Activated CD8-positive, alpha-beta memory T cell treated with anti-CD3 and anti-CD28 coated beads, Interleukin-2, amount 10 ng/mL, durations not matched to agents 7 days and 5 days (primary cell): ENCODE measurements at regions of chr20 and their contacts with region 1.

Region 1: DNA sequence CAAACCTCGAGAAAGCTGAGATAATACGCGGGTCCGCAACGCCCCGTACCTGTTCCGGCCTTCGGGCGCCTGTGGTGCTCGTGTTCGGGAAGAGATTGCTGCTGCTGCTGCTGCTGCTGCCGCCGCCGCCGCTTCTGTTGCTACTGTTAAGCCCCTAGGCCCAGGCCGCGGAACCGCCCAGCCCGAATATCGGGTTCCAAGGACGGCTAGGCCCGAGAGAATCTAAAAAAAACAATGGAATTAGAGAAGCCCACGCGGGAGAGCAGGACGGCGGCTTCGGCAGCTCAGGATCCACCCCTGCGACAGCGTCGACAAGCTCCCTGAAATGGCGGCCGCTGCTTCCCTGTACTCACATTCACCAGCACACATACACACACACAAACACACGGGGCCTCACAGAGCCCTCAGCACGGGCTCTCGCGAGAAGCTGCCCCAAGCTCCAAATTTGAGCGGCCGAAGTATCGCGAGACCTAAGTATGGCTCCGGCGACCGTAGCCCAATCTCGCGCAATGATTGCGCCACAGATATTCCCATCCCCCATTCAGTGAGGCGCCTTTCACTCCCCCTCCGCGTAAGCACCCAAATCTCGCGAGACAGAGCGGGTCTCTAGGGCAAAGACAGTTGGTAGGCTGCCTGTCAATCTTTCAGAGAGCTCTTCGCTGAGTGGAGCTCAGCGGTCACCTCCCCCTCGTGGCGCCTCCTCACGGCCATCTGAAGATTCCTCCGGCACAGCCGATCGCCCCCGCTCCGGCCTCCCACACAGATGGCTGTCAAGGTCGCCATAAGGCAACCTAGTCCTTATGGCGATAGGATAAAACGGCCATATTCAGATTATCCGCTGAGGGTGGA is at the start of gene RBM39:
- DNase-seq: peak; percentile 100
- ATAC-seq: peak; percentile 85
- H3K4me3 Mint-ChIP-seq: peak within 1 kb of the TSS; percentile 94
- H3K27ac Mint-ChIP-seq: peak within 1 kb of the TSS; percentile 100
- H3K4me1 Mint-ChIP-seq: peaks cover 34% of the 10 kb centered on the region
- H3K27me3 Mint-ChIP-seq: no peaks in the 10 kb centered on the region
- total RNA-seq, gene RBM39: 357 to 360 TPM

Region 2: DNA sequence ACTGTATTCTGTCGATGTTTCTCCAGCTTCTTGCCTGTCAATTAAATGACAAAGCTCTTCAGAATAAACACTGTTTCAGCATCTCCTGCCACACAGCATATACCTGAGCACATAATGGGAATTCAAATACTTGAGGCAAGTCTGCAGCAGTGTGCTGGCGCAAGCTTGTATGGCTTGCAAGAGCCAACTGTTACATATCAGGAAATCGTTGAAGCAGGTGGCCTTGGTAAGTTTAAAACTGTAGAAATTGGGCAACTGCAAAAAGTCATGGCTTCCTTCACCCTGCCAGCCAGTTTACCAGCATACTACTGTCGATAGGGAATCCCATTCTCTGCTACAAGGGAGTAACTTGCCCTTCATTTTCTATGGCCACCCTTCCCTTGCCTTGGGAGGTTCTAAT is 100.4 kb before region 1 on chr20:
- CTCF ChIA-PET with region 1: no interaction called
- DNase-seq: no peak
- ATAC-seq: no peak
- H3K4me3 Mint-ChIP-seq: no peak overlapping the region
- H3K27ac Mint-ChIP-seq: no peak overlapping the region
- H3K4me1 Mint-ChIP-seq: peaks cover 52% of the 10 kb centered on the region
- H3K27me3 Mint-ChIP-seq: no peaks in the 10 kb centered on the region

Region 3: DNA sequence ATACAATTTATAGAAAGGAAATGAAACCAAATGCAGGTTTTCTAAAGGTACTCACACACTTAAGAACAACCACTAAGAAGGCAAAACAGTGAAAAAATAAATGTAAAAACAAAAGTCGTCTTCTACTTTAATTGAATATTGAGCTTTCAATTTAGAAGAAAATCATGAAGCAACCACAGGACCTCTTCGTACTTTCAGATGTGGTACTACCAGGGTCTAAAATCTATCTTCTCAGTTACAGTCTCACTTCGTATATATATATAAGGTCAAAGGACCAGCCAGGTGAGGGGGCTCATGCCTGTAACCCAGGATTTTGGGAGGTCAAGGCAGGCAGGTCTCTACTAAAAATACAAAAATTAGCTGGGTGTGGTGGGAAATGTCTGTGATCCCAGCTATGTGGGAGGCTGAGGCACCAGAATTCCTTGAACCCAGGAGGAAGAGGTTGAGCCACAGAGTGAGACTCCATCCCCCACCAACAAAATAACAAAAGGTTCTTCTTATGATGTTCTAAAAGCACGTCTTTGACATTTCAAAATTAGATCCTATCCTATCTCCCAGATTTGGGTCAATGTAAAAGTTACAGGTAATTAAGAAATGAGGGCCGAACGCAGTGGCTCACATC is 30.4 kb before region 1 on chr20:
- CTCF ChIA-PET with region 1: interaction called, 15 read pairs
- DNase-seq: no peak
- ATAC-seq: peak; percentile 64
- H3K4me3 Mint-ChIP-seq: peak overlapping the region; percentile 56
- H3K27ac Mint-ChIP-seq: peak overlapping the region; percentile 81
- H3K4me1 Mint-ChIP-seq: peaks cover 56% of the 10 kb centered on the region
- H3K27me3 Mint-ChIP-seq: no peaks in the 10 kb centered on the region

Region 4: DNA sequence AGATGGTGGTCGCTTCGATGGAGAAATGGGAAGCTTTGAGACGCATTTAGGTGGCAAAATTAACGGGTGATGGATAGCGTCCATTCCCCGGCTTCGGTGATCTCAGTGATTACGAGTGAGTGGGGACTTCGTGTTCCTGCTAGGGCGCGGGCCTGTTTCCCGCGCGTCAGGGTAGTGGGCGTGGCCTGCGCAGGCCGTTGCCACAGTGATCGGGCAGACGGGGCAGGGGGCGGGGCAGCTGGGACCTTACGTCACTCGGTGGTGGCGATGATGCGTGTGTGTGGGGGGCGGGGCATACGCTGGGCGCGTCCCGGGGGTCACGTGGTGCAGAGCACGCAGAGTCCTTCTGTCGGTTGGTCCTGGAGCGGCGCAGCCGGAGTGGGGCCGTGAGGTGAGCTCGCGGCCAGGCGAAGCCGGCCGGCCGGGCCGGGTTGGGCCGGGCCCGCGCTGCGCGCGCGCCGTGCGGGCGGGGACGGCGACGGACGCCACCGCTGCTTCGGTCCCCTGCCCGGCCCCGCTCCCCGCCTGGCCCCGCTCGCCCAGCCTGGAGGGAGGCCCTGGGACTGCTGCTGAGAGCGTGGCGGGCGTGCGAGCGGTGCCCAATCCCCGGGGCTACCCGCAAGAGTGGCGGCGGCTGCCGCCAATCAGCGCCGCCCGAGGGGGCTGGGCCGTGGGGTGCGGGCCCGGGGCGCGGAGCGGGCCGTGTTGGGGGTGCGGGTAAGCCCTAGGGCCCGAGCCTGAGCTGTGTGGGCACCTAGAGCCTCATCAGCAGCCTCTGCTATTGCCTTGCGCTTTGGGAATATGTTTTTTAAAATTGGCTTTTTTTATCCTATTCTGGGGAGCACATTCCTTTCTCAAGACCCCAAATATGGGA is 29.8 kb after region 1 on chr20 and contains the start of gene PHF20:
- CTCF ChIA-PET with region 1: interaction called, 104 read pairs
- DNase-seq: peak; percentile 100
- ATAC-seq: peak; percentile 93
- H3K4me3 Mint-ChIP-seq: peak within 1 kb of the TSS; percentile 85
- H3K27ac Mint-ChIP-seq: peak within 1 kb of the TSS; percentile 92
- H3K4me1 Mint-ChIP-seq: peaks cover 65% of the 10 kb centered on the region
- H3K27me3 Mint-ChIP-seq: no peaks in the 10 kb centered on the region
- total RNA-seq, gene PHF20: 50.8 to 52.4 TPM

Region 5: DNA sequence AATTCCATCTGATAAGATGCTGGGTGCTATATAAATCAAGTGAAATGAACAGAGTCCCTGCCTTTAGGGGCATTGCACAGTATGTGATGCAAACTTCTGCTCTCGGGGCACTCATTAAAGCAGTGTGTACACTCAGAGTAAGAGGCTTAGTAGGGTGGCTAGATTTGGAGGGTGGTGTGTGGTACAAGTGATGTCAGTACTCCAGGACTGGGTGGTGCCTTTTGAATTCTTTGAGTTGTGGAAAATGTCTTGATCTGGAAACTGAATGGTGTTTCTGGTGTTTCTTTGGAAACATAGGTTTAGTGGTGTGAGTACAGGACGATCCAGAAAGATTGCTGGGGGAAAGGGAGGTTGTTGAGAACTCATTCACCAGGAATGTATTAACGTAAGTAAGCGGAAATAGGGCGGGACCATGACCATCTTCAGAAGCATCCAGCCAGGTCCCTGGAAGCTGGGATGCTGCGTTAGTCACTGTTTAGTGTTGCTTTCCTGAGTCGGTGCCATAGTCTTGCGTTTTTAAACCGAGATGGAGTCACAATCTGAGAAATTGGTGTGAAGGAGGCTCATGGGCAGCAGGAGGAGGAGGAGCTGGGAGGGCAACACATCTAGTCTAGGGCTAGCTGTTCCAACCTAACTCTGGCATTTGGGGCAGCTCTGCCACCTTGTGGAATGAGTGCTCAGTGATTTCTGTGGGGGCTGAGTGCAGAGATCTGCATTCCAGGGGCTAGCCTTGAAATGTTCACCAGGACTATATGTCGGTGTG is 141.8 kb after region 1 on chr20:
- CTCF ChIA-PET with region 1: interaction called, 13 read pairs
- DNase-seq: peak; percentile 75
- ATAC-seq: peak; percentile 92
- H3K4me3 Mint-ChIP-seq: no peak overlapping the region
- H3K27ac Mint-ChIP-seq: no peak overlapping the region
- H3K4me1 Mint-ChIP-seq: peaks cover 8% of the 10 kb centered on the region
- H3K27me3 Mint-ChIP-seq: no peaks in the 10 kb centered on the region